MCF 10A (cell line): ENCODE measurements at regions of chr3 and their contacts with region 1.

Region 1: GRCh38 chr3:129794311-129795185 is 99.0 kb downstream of the TMCC1 start:
- DNase-seq: peak; percentile 84
- H3K4me3 Mint-ChIP-seq: peak overlapping the region; percentile 70
- H3K27ac Mint-ChIP-seq: peak overlapping the region; percentile 82
- H3K4me1 Mint-ChIP-seq: peaks cover 33% of the 10 kb centered on the region
- H3K27me3 Mint-ChIP-seq: no peaks in the 10 kb centered on the region
- CTCF ChIP-seq: no peak

Region 2: GRCh38 chr3:129567176-129567705 is 227.3 kb before region 1 on chr3:
- CTCF ChIA-PET with region 1: no interaction called
- POLR2A ChIA-PET with region 1: no interaction called
- intact Hi-C with region 1: no loop called
- DNase-seq: no peak
- H3K4me3 Mint-ChIP-seq: no peak overlapping the region
- H3K27ac Mint-ChIP-seq: no peak overlapping the region
- H3K4me1 Mint-ChIP-seq: no peaks in the 10 kb centered on the region
- H3K27me3 Mint-ChIP-seq: no peaks in the 10 kb centered on the region
- CTCF ChIP-seq: no peak

Region 3: DNA sequence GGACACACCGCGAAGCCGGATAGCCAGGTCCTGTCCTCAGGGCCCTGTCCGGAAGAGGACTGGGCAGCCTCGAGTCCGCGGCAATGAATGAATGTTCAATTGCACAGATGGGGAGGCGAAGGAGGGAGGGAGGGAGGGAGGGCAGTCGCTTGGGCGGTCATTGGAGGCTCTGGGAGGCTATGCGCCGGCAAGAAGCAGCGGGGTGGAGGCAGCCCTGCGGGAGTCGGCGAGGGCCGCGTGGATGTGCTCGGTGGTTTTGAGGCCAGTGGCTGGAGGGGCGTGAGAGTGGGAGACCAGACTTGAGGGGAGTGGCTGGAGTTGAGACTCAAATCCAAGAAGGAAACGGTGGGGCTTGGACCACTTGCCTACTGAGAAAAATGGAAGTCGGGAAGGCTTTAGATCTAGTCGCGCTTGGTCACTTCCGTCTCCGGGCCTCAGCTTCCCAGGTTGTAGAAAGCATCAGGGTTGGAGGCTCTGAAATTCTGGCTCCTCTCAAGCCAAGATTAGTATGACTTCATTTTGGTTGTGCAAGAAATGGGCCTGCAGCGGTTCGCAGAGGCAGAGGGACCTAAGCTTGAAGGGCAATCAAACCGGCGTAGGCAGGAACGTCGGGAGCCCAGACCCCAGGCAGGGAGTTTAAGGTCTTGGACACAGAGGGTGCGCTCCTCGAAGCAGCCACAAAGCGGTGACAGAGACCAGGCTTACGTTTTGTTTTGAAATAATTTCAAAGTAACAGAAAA is 166.9 kb before region 1 on chr3:
- CTCF ChIA-PET with region 1: interaction called, 6 read pairs
- POLR2A ChIA-PET with region 1: interaction called, 10 read pairs
- intact Hi-C with region 1: no loop called
- DNase-seq: peak; percentile 92
- H3K4me3 Mint-ChIP-seq: peak overlapping the region; percentile 71
- H3K27ac Mint-ChIP-seq: peak overlapping the region; percentile 74
- H3K4me1 Mint-ChIP-seq: peaks cover 20% of the 10 kb centered on the region
- H3K27me3 Mint-ChIP-seq: no peaks in the 10 kb centered on the region
- CTCF ChIP-seq: peak; percentile 63

Region 4: DNA sequence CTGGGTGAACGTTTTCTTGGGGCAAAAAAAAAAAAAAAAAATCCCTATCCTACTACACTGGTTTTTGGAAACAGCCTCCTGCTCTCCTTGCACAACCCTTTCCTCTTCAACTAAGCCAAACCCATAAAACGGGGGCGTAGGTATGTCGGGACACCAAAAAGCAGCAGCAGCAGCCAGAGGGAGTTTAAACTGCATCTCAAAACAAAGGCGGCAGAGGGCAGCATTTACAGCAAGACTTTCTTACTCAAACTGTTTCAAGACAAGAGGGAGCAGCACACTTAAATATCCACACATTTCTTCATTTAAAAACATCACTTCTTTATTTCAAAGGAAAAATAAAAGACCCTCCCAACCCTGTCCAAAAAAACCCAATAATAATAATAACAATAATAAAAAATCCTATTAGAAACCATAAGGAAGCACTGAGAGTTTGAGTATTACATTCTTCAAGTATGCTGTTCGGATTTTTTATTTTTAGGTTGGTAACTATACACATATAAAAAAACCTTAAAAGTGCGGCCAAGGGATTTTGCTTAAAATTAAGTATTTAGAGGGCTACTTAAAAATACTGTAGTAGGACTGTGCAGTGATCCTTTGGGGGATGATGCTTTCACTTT is 144.2 kb before region 1 on chr3:
- CTCF ChIA-PET with region 1: interaction called, 3 read pairs
- POLR2A ChIA-PET with region 1: interaction called, 4 read pairs
- intact Hi-C with region 1: loop called (anchors 1 kb)
- DNase-seq: peak; percentile 88
- H3K4me3 Mint-ChIP-seq: no peak overlapping the region
- H3K27ac Mint-ChIP-seq: no peak overlapping the region
- H3K4me1 Mint-ChIP-seq: peaks cover 21% of the 10 kb centered on the region
- H3K27me3 Mint-ChIP-seq: no peaks in the 10 kb centered on the region
- CTCF ChIP-seq: peak; percentile 75

Region 5: GRCh38 chr3:129663026-129663446 is 131.5 kb before region 1 on chr3:
- CTCF ChIA-PET with region 1: interaction called, 4 read pairs
- POLR2A ChIA-PET with region 1: interaction called, 14 read pairs
- intact Hi-C with region 1: loop called (anchors 5 kb)
- DNase-seq: peak; percentile 78
- H3K4me3 Mint-ChIP-seq: peak overlapping the region; percentile 22
- H3K27ac Mint-ChIP-seq: peak overlapping the region; percentile 68
- H3K4me1 Mint-ChIP-seq: peaks cover 30% of the 10 kb centered on the region
- H3K27me3 Mint-ChIP-seq: no peaks in the 10 kb centered on the region
- CTCF ChIP-seq: no peak

Region 6: GRCh38 chr3:129783470-129783869 is 11.1 kb before region 1 on chr3:
- CTCF ChIA-PET with region 1: no interaction called
- POLR2A ChIA-PET with region 1: interaction called, 13 read pairs
- intact Hi-C with region 1: no loop called
- DNase-seq: no peak
- H3K4me3 Mint-ChIP-seq: no peak overlapping the region
- H3K27ac Mint-ChIP-seq: no peak overlapping the region
- H3K4me1 Mint-ChIP-seq: no peaks in the 10 kb centered on the region
- H3K27me3 Mint-ChIP-seq: no peaks in the 10 kb centered on the region
- CTCF ChIP-seq: no peak

Region 7: DNA sequence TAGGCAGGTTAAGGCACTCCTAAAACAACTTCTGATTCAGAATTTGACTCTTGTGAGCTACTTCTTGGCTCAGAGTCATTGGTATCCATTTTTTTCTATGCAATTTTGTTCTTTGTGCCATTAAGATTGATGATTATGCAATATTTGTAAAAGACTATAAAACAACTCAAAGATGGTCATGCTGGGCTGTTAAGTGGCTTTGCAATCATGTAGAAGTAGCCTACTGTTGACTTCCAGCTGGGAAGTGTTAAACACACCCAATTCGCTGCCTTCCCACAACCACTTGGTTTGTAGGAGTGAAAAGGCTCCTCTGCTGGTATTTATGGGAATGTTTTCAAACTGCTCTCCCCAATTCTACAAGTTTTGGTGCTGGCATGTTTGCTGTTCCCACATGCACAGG is 647.7 kb after region 1 on chr3:
- CTCF ChIA-PET with region 1: no interaction called
- POLR2A ChIA-PET with region 1: no interaction called
- intact Hi-C with region 1: no loop called
- DNase-seq: no peak
- H3K4me3 Mint-ChIP-seq: no peak overlapping the region
- H3K27ac Mint-ChIP-seq: no peak overlapping the region
- H3K4me1 Mint-ChIP-seq: no peaks in the 10 kb centered on the region
- H3K27me3 Mint-ChIP-seq: peaks cover 20% of the 10 kb centered on the region
- CTCF ChIP-seq: no peak